CD14-positive monocyte (primary cell): ENCODE measurements at regions of chr2 and their contacts with region 1.

Region 1: DNA sequence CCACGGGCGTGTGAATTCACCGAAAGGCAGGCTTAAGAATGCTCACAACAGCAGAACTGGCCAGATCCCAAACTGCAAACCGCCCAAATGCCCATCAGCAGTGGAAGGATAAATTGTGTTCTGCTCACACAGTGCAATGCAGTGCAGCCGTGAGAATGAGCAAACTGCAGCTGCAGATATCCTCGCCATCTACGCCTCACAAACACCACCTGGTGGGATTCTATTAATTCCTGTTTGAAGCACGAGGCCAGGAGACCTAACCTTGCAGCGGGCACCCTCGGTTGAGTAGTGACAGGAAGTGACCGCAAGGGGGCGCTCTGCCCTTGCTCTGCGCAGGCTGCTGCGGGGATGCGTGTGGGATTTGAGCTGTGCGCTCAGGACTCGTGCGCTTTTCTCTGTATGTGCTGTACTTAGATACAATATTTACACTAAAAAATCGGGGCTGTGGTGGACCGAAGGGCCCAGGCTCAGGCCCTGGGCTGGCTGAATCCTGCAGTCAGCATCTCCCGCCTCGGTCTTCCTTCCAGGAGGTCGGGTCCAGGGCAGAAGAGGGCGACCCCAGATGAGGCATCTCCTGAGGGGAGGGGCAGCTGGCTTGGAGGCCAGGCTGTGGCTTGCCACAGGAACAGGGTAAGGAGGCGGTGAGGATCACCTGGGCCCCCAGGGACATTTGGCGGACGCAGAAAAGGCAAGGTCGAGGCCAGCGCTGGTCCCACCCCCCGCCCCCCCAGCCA is 19.8 kb upstream of the PDIA6 start:
- DNase-seq: peak; percentile 64 to 75 (median 71)
- H3K4me3 ChIP-seq: no peak overlapping the region
- H3K4me3 Mint-ChIP-seq: peak overlapping the region in 1 of 2 donors; percentile 55
- H3K27ac ChIP-seq: no peak overlapping the region
- H3K27ac Mint-ChIP-seq: no peak overlapping the region
- H3K4me1 ChIP-seq: no peaks in the 10 kb centered on the region
- H3K4me1 Mint-ChIP-seq: peaks cover 10% of the 10 kb centered on the region
- H3K27me3 ChIP-seq: peaks cover 0 to 48% of the 10 kb centered on the region in 2 donors
- H3K27me3 Mint-ChIP-seq: peaks cover 23 to 52% (median 35%) of the 10 kb centered on the region in 3 donors
- CTCF ChIP-seq: peak; percentile 92

Region 2: GRCh38 chr2:10790228-10790979 is 42.0 kb before region 1 on chr2:
- intact Hi-C with region 1: no loop called
- DNase-seq: no peak
- H3K4me3 ChIP-seq: no peak overlapping the region
- H3K4me3 Mint-ChIP-seq: no peak overlapping the region
- H3K27ac ChIP-seq: no peak overlapping the region
- H3K27ac Mint-ChIP-seq: peak overlapping the region in 1 of 7 donors; percentile 61
- H3K4me1 ChIP-seq: no peaks in the 10 kb centered on the region
- H3K4me1 Mint-ChIP-seq: no peaks in the 10 kb centered on the region
- H3K27me3 ChIP-seq: no peaks in the 10 kb centered on the region
- H3K27me3 Mint-ChIP-seq: no peaks in the 10 kb centered on the region
- CTCF ChIP-seq: no peak

Region 3: DNA sequence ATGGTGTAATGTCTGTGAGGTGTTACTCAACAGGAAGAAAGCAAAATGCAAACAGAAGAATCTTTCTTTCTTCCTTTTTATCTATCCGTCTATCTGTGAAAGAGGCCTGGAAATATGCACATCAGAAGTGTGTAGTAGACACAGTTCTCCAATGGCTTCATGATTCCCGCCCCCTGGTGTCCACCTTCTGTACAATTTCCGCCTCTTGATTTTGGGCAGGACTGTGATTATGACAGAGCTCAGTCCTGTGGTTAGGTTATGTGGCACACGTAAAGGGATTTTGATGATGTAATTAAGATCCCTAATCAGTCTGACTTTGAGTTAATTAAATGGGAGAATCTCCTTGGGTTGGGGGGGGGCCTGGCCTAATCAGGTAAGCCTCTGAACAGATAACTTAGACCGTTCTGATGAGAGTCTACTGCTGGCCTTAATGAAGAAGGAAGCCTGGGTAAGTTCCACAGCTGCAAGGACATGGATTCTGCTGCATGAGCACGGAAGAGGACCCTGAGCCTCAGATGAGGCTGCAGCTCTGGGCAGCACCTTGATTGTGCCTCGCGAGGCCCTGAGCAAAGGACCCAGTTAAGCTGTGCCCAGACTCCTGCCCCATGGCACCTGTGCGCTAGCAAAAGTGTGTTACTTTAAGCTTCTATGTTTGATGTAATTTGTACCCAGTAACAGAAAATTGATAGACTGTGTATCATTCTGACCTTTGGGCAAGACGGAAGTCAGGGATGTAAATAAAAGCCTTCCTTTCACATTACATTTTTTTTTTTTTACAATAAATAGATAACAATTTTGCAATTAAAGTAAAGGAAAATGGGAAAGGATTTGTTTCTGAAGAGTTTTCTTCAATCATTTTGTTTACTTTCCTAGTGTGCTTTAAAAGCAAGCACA is 68.1 kb after region 1 on chr2:
- intact Hi-C with region 1: loop called (anchors 1 to 5 kb)
- DNase-seq: peak in 2 of 3 donors; percentile 33 to 66
- H3K4me3 ChIP-seq: no peak overlapping the region
- H3K4me3 Mint-ChIP-seq: no peak overlapping the region
- H3K27ac ChIP-seq: no peak overlapping the region
- H3K27ac Mint-ChIP-seq: no peak overlapping the region
- H3K4me1 ChIP-seq: no peaks in the 10 kb centered on the region
- H3K4me1 Mint-ChIP-seq: peaks cover 6% of the 10 kb centered on the region
- H3K27me3 ChIP-seq: peaks cover 0 to 3% of the 10 kb centered on the region in 2 donors
- H3K27me3 Mint-ChIP-seq: peaks cover 3 to 16% (median 8%) of the 10 kb centered on the region in 3 donors
- CTCF ChIP-seq: peak; percentile 78

Region 4: DNA sequence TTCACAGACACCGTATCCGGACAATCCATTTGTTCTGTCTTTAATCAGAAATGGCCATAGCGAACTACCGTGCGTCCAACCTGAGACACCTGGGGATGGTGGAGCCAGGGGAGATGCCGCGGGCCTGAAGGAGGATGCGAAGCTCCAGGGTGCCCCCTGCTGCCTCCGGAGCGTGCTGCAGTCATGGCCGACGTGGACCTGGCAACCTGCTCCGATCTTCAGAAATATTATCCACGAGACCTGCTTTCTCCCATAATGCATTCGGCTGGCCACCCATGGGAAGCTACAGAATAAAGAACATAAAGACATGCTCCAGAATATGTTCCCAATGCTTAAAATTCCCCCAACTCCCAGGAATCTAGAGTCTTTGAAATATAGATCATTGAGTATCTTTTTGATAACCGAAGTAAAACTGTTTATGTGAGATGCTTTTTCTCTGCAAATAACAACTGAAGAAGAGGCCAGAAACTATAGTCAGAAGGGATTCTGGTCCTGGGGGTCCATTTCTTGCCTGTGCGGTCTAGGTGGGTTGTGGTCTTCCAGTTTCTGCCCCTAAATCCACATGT is 292.2 kb after region 1 on chr2:
- intact Hi-C with region 1: loop called (anchors 2 to 5 kb)
- DNase-seq: no peak
- H3K4me3 ChIP-seq: no peak overlapping the region
- H3K4me3 Mint-ChIP-seq: no peak overlapping the region
- H3K27ac ChIP-seq: no peak overlapping the region
- H3K27ac Mint-ChIP-seq: no peak overlapping the region
- H3K4me1 ChIP-seq: peaks cover 1 to 2% of the 10 kb centered on the region in 2 donors
- H3K4me1 Mint-ChIP-seq: peaks cover 13% of the 10 kb centered on the region
- H3K27me3 ChIP-seq: peaks cover 0 to 10% of the 10 kb centered on the region in 2 donors
- H3K27me3 Mint-ChIP-seq: peaks cover 14 to 33% (median 16%) of the 10 kb centered on the region in 3 donors
- CTCF ChIP-seq: peak; percentile 70

Region 5: DNA sequence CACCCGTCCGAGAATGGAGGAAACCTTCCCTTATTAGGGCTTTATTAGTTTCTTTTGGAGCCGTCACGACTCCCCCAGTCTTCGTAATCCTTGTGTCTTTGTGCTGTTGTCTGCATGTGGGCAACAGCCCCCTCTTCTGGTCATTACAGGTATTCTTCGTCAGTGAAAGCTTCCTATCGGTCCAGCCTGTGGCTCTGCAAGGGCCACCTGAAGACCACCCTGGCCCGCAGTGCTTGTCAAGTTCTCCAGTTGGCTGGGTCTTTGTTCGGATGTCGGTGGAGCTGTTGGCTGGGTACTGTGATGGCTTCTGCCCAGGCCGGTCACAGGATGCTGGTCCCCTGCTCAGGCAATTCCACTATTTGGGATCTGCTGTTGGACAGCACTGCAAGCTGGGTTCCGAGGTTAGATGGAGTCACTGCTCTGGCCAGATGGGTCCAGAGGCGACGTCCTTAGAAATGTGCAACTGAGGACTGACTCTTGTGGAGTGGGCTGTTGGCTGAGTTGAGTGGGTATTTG is 614.4 kb after region 1 on chr2:
- intact Hi-C with region 1: loop called in 1 of 2 experiments (anchors 10 kb)
- DNase-seq: peak; percentile 27 to 49 (median 44)
- H3K4me3 ChIP-seq: no peak overlapping the region
- H3K4me3 Mint-ChIP-seq: no peak overlapping the region
- H3K27ac ChIP-seq: no peak overlapping the region
- H3K27ac Mint-ChIP-seq: peak overlapping the region in 1 of 7 donors; percentile 22
- H3K4me1 ChIP-seq: no peaks in the 10 kb centered on the region
- H3K4me1 Mint-ChIP-seq: no peaks in the 10 kb centered on the region
- H3K27me3 ChIP-seq: no peaks in the 10 kb centered on the region
- H3K27me3 Mint-ChIP-seq: no peaks in the 10 kb centered on the region
- CTCF ChIP-seq: peak; percentile 85